AG04450 (cell line): ENCODE measurements at regions of chr2 and their contacts with region 1.

Region 1: DNA sequence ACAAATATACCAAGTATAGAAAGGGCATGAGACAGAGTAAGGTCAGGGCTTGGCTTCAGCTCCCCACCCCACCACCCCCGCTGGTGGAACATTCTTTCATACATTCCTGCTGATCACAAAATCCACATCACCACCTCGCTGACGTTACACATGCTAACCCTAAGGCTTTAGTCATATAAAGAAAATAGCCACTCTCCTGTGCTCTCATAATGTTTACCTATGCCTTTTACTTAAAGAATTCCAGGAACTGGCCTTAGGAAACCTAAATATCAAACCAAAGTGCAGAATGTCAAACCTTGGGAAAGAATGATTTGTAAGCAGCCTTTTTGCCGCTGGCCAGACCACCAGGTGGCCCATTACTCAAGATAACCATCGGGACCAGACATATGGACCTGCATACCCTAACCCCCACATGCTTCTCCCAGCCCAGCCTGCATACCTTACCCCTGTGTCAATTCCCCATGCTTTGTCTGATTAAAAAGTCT is 136.3 kb upstream of the SLC39A10 start:
- DNase-seq: peak; percentile 94
- H3K4me3 ChIP-seq: no peak overlapping the region
- H3K27ac ChIP-seq: peak overlapping the region; percentile 93
- H3K27me3 ChIP-seq: no peaks in the 10 kb centered on the region
- CTCF ChIP-seq: no peak

Region 2: DNA sequence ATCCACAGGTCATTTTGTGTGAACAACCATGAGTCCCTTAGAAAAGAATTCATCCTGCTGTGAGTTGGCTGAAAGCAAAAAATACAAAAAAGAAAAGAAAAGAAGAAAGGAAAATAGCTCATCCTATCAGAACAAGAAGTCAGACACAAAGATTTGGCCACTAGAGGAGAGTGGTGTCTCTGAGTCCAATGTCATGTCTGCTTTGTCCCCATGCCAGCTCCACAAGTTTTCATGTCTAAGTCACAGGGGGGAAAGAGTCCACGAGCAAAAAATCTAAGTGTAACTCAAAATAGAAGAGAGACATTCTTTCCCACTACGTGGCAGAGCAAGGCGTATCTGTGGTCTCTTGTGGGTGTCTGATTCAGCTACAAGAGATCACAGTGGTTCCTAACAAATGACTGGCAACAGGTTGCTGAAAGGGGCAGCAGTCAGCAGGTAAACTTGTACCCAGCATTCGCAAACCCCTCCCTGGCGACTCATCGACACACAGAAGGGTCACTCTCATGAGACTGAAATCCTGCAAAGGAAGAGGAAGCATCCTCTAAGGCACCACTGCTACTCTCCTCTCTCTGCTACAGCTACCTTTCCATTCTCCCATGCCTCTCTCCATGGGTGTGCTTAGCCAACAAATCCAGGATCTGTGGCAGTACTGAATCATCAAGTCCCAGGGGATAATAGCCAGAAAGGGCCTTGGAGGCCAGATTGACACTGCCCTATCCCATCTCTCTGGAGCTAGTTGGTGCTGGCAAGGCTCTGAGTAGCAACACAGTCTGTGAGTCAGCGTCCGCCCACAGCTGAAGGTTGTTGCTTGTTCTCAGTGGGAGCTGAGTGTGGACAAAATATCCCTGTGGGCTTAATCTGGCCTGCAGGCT is 13.3 kb after region 1 on chr2:
- CTCF ChIA-PET with region 1: interaction called, 3 read pairs
- POLR2A ChIA-PET with region 1: interaction called, 13 read pairs
- DNase-seq: peak; percentile 79
- H3K4me3 ChIP-seq: peak overlapping the region; percentile 20; the same call in 1 of the 2 replicates
- H3K27ac ChIP-seq: peak overlapping the region; percentile 93
- H3K27me3 ChIP-seq: no peaks in the 10 kb centered on the region
- CTCF ChIP-seq: no peak

Region 3: GRCh38 chr2:195559431-195559914 is 38.8 kb after region 1 on chr2:
- CTCF ChIA-PET with region 1: no interaction called
- POLR2A ChIA-PET with region 1: no interaction called
- DNase-seq: peak; percentile 99
- H3K4me3 ChIP-seq: no peak overlapping the region
- H3K27ac ChIP-seq: peak overlapping the region; percentile 96
- H3K27me3 ChIP-seq: no peaks in the 10 kb centered on the region
- CTCF ChIP-seq: no peak

Region 4: DNA sequence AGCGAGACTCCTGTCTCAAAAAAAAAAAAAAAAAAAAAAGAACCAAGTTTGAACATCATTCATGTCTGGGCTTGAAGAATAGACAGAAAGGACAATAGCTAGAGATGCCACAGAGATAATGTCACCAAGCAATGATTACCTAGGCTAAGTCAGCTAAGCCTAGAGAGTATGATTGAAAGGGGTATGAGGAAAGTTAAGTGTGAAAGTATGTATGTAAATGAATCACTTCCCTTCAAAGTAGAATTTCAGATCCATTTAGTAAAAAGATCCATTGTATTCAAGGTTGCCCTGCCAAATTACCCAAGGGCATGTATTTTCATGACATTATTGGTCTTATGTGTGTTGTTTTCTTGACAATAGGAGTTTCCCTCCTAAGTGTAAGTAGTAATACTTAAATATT is 102.2 kb after region 1 on chr2:
- CTCF ChIA-PET with region 1: no interaction called
- POLR2A ChIA-PET with region 1: no interaction called
- DNase-seq: no peak
- H3K4me3 ChIP-seq: no peak overlapping the region
- H3K27ac ChIP-seq: no peak overlapping the region
- H3K27me3 ChIP-seq: no peaks in the 10 kb centered on the region
- CTCF ChIP-seq: no peak